ENCODE measurements at regions of chr3 and their contacts with region 1.

Region 1: GRCh38 chr3:73827725-73828211 is 203.0 kb upstream of the PDZRN3 start:
- DNase-seq: peak in 1 of 2 donors; percentile 15
- ATAC-seq: peak; percentile 75 to 92 (median 88)
- H3K4me3 ChIP-seq: no peak overlapping the region
- H3K27ac ChIP-seq: peak overlapping the region; percentile 46 to 84 (median 74)
- H3K4me1 ChIP-seq: peaks cover 9 to 29% (median 18%) of the 10 kb centered on the region in 9 donors
- H3K27me3 ChIP-seq: no peaks in the 10 kb centered on the region
- CTCF ChIP-seq: no peak

Region 2: GRCh38 chr3:73637042-73637441 is 190.7 kb before region 1 on chr3:
- intact Hi-C with region 1: loop called in 1 of 10 experiments (anchors 10 kb)
- DNase-seq: no peak
- ATAC-seq: peak in 1 of 8 donors; percentile 18
- H3K4me3 ChIP-seq: no peak overlapping the region
- H3K27ac ChIP-seq: no peak overlapping the region
- H3K4me1 ChIP-seq: no peaks in the 10 kb centered on the region
- H3K27me3 ChIP-seq: no peaks in the 10 kb centered on the region
- CTCF ChIP-seq: no peak

Region 3: DNA sequence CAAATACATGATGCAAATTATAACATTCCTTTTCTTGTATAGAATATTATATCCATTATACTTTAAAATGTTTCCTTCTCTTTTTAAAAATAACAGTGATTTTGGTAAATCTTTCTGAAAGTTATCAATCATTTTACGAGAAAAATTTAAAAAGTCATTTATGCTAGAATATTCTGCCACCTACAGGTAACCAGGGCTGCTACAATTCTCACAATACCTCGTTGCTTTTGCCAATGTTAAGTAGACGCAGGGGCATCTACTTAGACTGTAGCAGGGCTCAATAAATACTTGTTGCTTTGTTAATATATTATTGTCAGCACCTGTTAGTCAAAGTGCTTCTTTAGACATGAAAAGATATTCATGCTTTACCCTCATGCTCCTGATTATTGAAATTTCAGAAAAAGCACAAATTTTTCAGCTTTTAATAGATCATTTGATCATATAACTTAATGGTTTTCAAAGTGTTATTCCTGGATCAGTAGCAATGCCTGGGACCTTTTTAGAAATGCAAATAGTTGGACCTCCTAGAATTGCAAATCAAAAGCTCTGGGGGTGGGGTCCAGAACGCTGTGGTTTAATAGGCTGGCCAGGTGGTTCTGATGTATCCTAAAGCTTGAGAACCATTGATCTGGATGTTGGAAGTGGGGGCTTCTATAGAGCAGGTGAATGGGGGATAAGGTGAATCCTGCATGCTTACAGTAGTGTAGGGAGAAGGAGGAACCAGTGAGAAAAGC is 20.6 kb after region 1 on chr3:
- intact Hi-C with region 1: no loop called
- DNase-seq: no peak
- ATAC-seq: peak in 1 of 8 donors; percentile 57
- H3K4me3 ChIP-seq: no peak overlapping the region
- H3K27ac ChIP-seq: no peak overlapping the region
- H3K4me1 ChIP-seq: peaks cover 0 to 7% (median 0%) of the 10 kb centered on the region in 9 donors
- H3K27me3 ChIP-seq: no peaks in the 10 kb centered on the region
- CTCF ChIP-seq: peak; percentile 27 to 81 (median 68)

Measured in heart right ventricle (tissue), 16 donors.